ENCODE measurements at regions of chr9 and their contacts with region 1.

Region 1: DNA sequence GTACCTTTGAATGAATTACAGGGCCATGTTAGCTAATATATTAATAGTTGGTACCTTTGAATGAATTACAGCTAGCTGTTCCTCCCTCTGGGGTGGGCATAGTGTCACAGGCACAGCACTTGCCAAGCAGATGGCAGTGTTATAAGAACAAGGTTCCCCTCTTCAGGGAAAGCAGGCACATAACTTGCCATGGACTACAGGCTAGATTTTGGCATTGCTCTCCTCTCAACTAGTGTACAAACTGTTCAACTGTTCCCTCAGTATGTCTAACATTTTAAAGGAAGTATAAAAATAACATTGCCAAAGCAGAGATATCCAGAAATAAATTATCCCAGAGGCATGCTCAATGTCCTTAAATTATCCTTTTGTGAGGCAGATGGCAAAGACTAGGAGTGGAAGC is 33.7 kb downstream of the ABITRAM start:
- DNase-seq: no peak
- ATAC-seq: peak; percentile 40 to 68

Region 2: GRCh38 chr9:109005678-109006077 is 37.8 kb after region 1 on chr9:
- intact Hi-C with region 1: loop called in 1 of 2 experiments (anchors 5 kb)
- DNase-seq: no peak
- ATAC-seq: no peak